Right ventricle myocardium inferior (tissue), 1 donor: ENCODE measurements at regions of chr11 and their contacts with region 1.

Region 1: GRCh38 chr11:94183886-94184264 is 55.2 kb downstream of the PANX1 start:
- DNase-seq: no peak
- ATAC-seq: peak; percentile 70

Region 2: DNA sequence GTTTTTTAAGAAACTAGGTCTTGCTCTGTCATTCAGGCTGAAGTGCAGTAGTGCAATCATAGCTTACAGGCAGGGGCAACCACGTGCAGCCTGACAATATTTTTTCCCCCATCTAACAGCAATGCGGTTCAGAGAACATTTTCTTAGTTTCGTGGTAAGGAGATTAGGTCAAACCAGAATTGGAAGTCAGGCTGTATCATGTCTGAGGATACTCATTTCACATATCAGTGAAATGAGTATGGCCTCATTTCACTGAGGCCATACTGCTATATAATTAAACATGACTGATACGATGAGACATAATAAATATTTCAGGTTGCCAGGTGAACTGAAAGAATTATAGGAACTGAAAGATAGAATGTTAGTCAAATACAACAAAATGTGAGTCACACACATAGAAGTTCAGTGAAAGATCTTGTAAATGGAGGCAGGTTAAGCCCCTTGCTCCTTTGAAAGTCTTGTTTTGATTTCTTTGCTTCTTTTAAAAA is 88.1 kb after region 1 on chr11:
- intact Hi-C with region 1: loop called (anchors 10 kb)
- DNase-seq: no peak
- ATAC-seq: no peak

Region 3: GRCh38 chr11:94417386-94417987 is 233.6 kb after region 1 on chr11:
- intact Hi-C with region 1: loop called (anchors 10 kb)
- DNase-seq: no peak
- ATAC-seq: no peak

Region 4: DNA sequence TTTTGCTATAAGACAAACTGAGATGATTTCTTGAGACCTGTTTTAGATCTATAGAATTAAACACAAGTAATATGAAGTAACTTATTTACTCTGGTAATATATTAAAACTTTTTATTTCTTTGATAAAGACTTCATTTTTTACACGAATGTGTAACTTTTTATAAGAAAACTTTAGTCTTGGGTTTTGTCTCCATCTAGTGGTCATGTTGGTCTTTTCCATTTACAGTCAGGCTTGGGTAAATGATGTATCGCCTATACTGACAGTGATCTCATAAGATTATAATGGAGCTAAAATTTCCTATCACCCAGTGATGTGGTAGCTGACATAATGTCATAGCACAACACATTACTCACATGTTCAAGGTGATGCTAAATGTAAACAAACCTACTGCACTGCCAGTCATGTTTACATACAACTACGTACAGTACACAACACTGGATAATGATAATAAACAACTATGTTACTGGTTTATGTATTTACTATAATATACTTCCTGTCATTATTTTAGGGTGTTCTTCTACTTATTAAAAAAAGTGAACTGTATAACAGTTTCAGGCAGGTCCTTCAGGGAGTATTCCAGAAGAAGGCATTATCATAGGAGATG is 320.9 kb after region 1 on chr11:
- intact Hi-C with region 1: loop called (anchors 10 kb)
- DNase-seq: no peak
- ATAC-seq: no peak